Gastrocnemius medialis (tissue), 4 donors: ENCODE measurements at regions of chr22 and their contacts with region 1.

Region 1: GRCh38 chr22:20916983-20917810 is at the start of gene CRKL:
- DNase-seq: peak; percentile 96 to 97
- ATAC-seq: peak; percentile 87 to 90
- H3K4me3 ChIP-seq: peak within 1 kb of the TSS; percentile 87 to 97 (median 90)
- H3K27ac ChIP-seq: peak within 1 kb of the TSS; percentile 95 to 97 (median 96)
- H3K4me1 ChIP-seq: peaks cover 18 to 40% of the 10 kb centered on the region in 2 donors
- H3K27me3 ChIP-seq: no peaks in the 10 kb centered on the region
- CTCF ChIP-seq: peak; percentile 92 to 98 (median 96)
- POLR2A ChIP-seq: peak; percentile 99
- total RNA-seq, gene CRKL: 73.3 to 109 (median 84.7) TPM

Region 2: GRCh38 chr22:20858615-20859416 is 58.4 kb before region 1 on chr22 and contains the starts of genes PI4KA and SNAP29:
- in situ Hi-C with region 1: no loop called
- intact Hi-C with region 1: loop called (anchors 1 kb)
- DNase-seq: peak; percentile 98 to 99
- ATAC-seq: peak; percentile 95 to 98
- H3K4me3 ChIP-seq: peak within 1 kb of the TSS; percentile 68 to 93 (median 84)
- H3K27ac ChIP-seq: peak within 1 kb of the TSS; percentile 83 to 91 (median 90)
- H3K4me1 ChIP-seq: peaks cover 17 to 27% of the 10 kb centered on the region in 2 donors
- H3K27me3 ChIP-seq: no peaks in the 10 kb centered on the region
- CTCF ChIP-seq: peak in 3 of 5 experiments; percentile 5 to 50 (median 23)
- POLR2A ChIP-seq: peak; percentile 93 to 94
- total RNA-seq, gene PI4KA: 40.1 to 59.7 (median 45.4) TPM
- total RNA-seq, gene SNAP29: 22.1 to 41.1 (median 28.7) TPM

Region 3: GRCh38 chr22:20885557-20886323 is 31.5 kb before region 1 on chr22:
- in situ Hi-C with region 1: no loop called
- intact Hi-C with region 1: no loop called
- DNase-seq: peak; percentile 68 to 71
- ATAC-seq: peak; percentile 93 to 97
- H3K4me3 ChIP-seq: no peak overlapping the region
- H3K27ac ChIP-seq: peak overlapping the region in 3 of 4 donors; percentile 39 to 46 (median 41)
- H3K4me1 ChIP-seq: no peaks in the 10 kb centered on the region
- H3K27me3 ChIP-seq: no peaks in the 10 kb centered on the region
- CTCF ChIP-seq: peak; percentile 59 to 85 (median 77)
- POLR2A ChIP-seq: no peak

Region 4: GRCh38 chr22:20945578-20945934 is 28.4 kb after region 1 on chr22:
- in situ Hi-C with region 1: no loop called
- intact Hi-C with region 1: loop called (anchors 2 kb)
- DNase-seq: no peak
- ATAC-seq: no peak
- H3K4me3 ChIP-seq: no peak overlapping the region
- H3K27ac ChIP-seq: peak overlapping the region in 1 of 4 donors; percentile 6
- H3K4me1 ChIP-seq: peaks cover 39 to 49% of the 10 kb centered on the region in 2 donors
- H3K27me3 ChIP-seq: no peaks in the 10 kb centered on the region
- CTCF ChIP-seq: no peak
- POLR2A ChIP-seq: no peak

Region 5: DNA sequence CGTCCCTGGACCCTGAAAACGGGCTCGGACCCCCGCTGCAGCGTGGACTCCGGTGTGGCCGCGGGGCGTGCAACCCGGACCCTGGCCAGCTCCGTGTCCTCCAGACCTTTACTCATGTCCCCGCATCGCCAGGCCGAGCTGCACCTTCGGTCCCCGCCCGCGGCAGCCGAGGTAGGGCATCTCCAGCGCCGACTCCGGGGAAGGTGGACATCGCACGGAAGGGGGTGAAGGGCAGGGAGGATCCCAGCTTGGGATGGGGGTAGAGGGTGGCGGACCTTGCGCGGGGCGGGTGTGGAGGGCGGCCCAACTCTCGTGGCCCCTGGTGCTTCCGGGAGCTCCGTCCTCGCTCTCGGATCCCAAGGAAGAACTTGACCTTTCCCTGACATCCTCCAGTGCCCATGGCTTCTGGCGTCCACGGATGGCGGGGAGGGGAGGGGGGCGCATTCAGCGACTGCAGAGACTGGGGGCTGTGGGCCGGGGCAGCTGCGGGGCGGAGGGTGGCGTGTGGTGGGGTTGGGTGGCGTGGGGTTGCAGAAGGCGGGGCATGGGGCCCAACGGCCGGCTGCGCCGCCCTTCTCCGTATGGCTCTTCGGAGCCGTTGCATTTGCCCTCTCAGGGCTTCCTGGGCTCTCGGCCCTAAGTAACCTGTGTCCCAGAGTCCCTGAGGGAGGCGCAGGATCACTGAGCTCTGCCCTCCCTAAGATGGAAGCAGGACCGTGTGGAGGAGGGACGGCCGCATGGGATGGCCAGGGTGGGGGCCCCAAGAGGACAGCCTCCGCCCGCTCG is 40.3 kb after region 1 on chr22:
- in situ Hi-C with region 1: no loop called
- intact Hi-C with region 1: loop called (anchors 2 kb)
- DNase-seq: no peak
- ATAC-seq: peak in 1 of 2 donors; percentile 9
- H3K4me3 ChIP-seq: peak overlapping the region; percentile 58 to 77 (median 66)
- H3K27ac ChIP-seq: peak overlapping the region in 1 of 4 donors; percentile 6
- H3K4me1 ChIP-seq: peaks cover 45% of the 10 kb centered on the region in 2 donors
- H3K27me3 ChIP-seq: no peaks in the 10 kb centered on the region
- CTCF ChIP-seq: no peak
- POLR2A ChIP-seq: no peak

Region 6: GRCh38 chr22:20981787-20982562 is 64.8 kb after region 1 on chr22 and contains the start of gene LZTR1:
- in situ Hi-C with region 1: no loop called
- intact Hi-C with region 1: loop called (anchors 1 kb)
- DNase-seq: peak; percentile 73 to 75
- ATAC-seq: peak; percentile 93 to 95
- H3K4me3 ChIP-seq: peak within 1 kb of the TSS; percentile 80 to 97 (median 89)
- H3K27ac ChIP-seq: peak within 1 kb of the TSS; percentile 91 to 94 (median 93)
- H3K4me1 ChIP-seq: peaks cover 24 to 33% of the 10 kb centered on the region in 2 donors
- H3K27me3 ChIP-seq: no peaks in the 10 kb centered on the region
- CTCF ChIP-seq: peak; percentile 34 to 78 (median 71)
- POLR2A ChIP-seq: peak; percentile 93 to 94
- total RNA-seq, gene LZTR1: 25.4 to 36.4 (median 26.3) TPM